ENCODE measurements at regions of chr13 and their contacts with region 1.

Region 1: GRCh38 chr13:30371649-30372265 is 50.5 kb upstream of the UBE2L5 start:
- DNase-seq: peak; percentile 65
- H3K4me3 Mint-ChIP-seq: peak overlapping the region; percentile 68
- H3K27ac Mint-ChIP-seq: peak overlapping the region; percentile 84
- H3K4me1 Mint-ChIP-seq: peaks cover 80% of the 10 kb centered on the region
- H3K27me3 Mint-ChIP-seq: no peaks in the 10 kb centered on the region

Region 2: GRCh38 chr13:29595380-29596063 is 776.2 kb before region 1 on chr13 and contains the start of gene SLC7A1:
- intact Hi-C with region 1: loop called (anchors 10 kb)
- DNase-seq: peak; percentile 88
- H3K4me3 Mint-ChIP-seq: peak within 1 kb of the TSS; percentile 95
- H3K27ac Mint-ChIP-seq: peak within 1 kb of the TSS; percentile 95
- H3K4me1 Mint-ChIP-seq: peaks cover 51% of the 10 kb centered on the region
- H3K27me3 Mint-ChIP-seq: peaks cover 6% of the 10 kb centered on the region
- total RNA-seq, gene SLC7A1: 128 and 138 TPM in 2 replicates

Region 3: GRCh38 chr13:30158774-30159445 is 212.8 kb before region 1 on chr13:
- intact Hi-C with region 1: loop called (anchors 2 kb)
- DNase-seq: no peak
- H3K4me3 Mint-ChIP-seq: peak overlapping the region; percentile 23
- H3K27ac Mint-ChIP-seq: peak overlapping the region; percentile 78
- H3K4me1 Mint-ChIP-seq: peaks cover 43% of the 10 kb centered on the region
- H3K27me3 Mint-ChIP-seq: peaks cover under 1% of the 10 kb centered on the region

Region 4: GRCh38 chr13:30334663-30335386 is 36.9 kb before region 1 on chr13:
- intact Hi-C with region 1: no loop called
- DNase-seq: no peak
- H3K4me3 Mint-ChIP-seq: no peak overlapping the region
- H3K27ac Mint-ChIP-seq: no peak overlapping the region
- H3K4me1 Mint-ChIP-seq: peaks cover 26% of the 10 kb centered on the region
- H3K27me3 Mint-ChIP-seq: no peaks in the 10 kb centered on the region

Region 5: DNA sequence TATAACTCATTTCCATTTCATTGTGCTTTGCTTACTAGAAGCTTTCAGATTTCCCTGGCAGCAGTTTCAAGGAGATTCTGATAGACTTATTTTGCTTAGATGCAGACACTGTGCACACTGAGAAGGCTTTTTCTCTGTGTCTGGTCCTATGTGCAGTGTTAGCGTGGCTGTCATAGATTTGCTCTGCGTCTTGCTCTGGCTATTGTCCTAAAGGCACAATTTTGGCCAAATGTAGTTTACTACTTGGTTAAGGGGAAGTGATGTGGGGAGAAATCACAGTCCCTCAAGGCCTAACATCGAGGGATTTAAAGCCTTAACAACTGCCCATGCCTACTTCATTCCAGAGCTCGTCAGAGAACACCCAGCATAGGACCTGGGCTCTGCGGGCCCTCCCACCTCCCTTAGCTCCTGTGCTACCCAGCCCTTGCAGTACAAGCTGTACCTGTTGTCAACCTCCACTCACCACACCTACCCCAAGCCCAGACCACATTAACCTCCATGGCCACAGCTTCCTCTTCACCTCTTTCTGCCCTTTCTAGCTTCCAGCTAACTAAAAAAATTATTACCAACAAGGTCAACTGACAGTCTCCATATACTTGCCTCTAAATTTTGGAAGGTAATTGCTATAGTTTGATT is 25.5 kb before region 1 on chr13:
- intact Hi-C with region 1: loop called (anchors 2 kb)
- DNase-seq: peak; percentile 75
- H3K4me3 Mint-ChIP-seq: peak overlapping the region; percentile 56
- H3K27ac Mint-ChIP-seq: peak overlapping the region; percentile 79
- H3K4me1 Mint-ChIP-seq: peaks cover 46% of the 10 kb centered on the region
- H3K27me3 Mint-ChIP-seq: peaks cover 2% of the 10 kb centered on the region

Region 6: GRCh38 chr13:30408319-30409101 is 36.8 kb after region 1 on chr13:
- intact Hi-C with region 1: loop called (anchors 2 kb)
- DNase-seq: peak; percentile 88
- H3K4me3 Mint-ChIP-seq: peak overlapping the region; percentile 72
- H3K27ac Mint-ChIP-seq: peak overlapping the region; percentile 79
- H3K4me1 Mint-ChIP-seq: peaks cover 36% of the 10 kb centered on the region
- H3K27me3 Mint-ChIP-seq: peaks cover 10% of the 10 kb centered on the region

Region 7: GRCh38 chr13:30572859-30573275 is 201.1 kb after region 1 on chr13:
- intact Hi-C with region 1: loop called (anchors 10 kb)
- DNase-seq: no peak
- H3K4me3 Mint-ChIP-seq: peak overlapping the region; percentile 59
- H3K27ac Mint-ChIP-seq: no peak overlapping the region
- H3K4me1 Mint-ChIP-seq: peaks cover 44% of the 10 kb centered on the region
- H3K27me3 Mint-ChIP-seq: peaks cover 9% of the 10 kb centered on the region

Region 8: DNA sequence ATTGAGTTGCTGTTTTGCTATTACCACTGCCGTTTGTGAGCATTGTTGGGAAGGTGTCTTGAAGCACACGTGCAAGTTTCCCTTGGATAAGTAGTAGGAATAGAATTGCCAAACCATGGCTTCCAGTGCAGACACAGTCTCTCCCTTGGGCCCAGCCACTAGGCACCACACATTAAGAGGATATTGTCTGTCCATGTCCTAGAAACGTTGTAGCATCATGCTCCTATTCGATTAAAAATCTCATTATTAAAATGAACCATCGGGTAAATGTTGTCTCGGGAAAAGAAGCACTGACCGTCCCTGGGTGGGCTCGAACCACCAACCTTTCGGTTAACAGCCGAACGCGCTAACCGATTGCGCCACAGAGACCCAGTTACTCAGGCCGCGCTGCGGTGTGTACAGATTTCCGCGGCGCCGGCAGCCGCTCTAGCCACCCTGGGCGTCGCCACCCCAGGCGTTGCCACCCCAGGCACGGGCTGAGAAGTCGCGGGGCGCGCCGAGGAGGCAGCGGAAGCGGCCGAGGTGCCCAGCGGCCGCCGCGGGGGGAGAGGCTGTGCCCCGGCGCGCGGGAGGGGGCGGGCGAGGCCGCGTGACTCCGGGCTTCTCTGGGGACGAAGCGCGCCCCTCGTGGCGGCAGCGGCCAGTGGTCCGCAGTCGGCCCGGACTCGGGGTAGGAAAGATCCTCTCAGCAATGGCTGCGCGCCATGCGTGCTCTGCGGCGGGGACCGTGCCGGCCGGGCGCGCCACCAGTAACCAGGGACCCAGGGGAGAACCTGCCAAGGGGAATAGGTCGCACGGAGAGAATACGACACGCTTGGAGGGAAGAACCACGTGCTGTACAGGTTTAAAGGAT is 302.1 kb after region 1 on chr13:
- intact Hi-C with region 1: loop called (anchors 5 kb)
- DNase-seq: peak; percentile 80
- H3K4me3 Mint-ChIP-seq: peak overlapping the region; percentile 85
- H3K27ac Mint-ChIP-seq: peak overlapping the region; percentile 84
- H3K4me1 Mint-ChIP-seq: peaks cover 28% of the 10 kb centered on the region
- H3K27me3 Mint-ChIP-seq: peaks cover 22% of the 10 kb centered on the region

Measured in activated T-helper 1 cell treated with anti-CD3 and anti-CD28 coated beads, Interleukin-12 subunit alpha, Interleukin-12 subunit beta, Interleukin-2, Interleukin-4 antibody, amounts not matched to agents 30 ng/mL and 10 ng/mL and 1 ng/mL, durations not matched to agents 14 hours and 24 hours and 36 hours (primary cell).